ENCODE measurements at regions of chr2 and their contacts with region 1.

Region 1: GRCh38 chr2:97806738-97807618 is 93.6 kb downstream of the ZAP70 start:
- DNase-seq: peak; percentile 76
- H3K27ac ChIP-seq: no peak overlapping the region
- CTCF ChIP-seq: peak; percentile 93

Region 2: DNA sequence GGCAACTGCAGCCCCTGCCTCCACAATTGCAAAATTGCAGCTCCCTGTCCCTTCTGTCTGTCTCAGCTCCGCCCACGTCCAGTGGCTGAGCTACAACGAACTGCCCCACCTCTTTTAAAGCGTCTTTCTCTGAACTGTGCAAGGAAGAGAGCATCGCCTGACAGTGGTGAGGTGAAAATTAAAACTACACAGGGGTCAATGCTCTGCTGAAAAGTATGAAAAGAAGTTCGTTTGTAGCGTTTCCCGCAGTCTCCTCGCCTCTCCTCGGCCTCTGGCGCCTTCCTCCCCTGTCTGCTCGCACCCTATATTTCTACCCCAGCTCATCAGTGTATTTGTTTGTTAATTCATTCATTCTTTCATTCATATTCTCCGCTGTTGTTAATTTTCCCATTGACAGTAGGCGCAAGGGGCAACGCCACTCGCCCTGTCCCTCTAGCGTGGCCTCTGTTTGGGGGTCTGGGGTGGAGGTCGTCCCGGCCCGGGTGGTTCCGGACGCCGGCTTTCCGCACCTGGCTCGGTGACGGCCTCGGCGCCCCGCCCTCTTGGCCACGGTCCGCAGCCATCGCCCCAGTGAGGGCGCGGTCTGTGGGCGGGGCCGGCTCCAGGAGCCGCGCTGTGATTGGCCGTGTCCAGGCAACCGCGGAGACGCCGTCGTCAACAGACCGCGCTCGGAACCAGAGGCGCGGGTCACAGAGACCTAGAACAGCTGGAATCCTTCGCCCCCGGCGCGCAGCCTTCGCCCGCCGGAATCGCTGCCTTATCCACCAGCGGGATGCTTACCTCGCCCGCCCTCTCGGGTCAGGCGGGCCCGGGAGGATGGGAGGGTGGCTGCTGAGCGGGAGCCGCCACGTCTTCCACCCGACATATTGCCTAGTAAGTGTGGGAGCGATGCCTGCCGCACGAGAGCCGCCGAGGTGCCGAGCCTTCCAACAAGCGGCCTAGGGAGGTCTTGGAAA is 279.8 kb after region 1 on chr2 and contains the start of gene VWA3B:
- CTCF ChIA-PET with region 1: no interaction called
- POLR2A ChIA-PET with region 1: no interaction called
- DNase-seq: peak; percentile 91
- H3K27ac ChIP-seq: no peak within 1 kb of the TSS
- CTCF ChIP-seq: no peak

Region 3: GRCh38 chr2:98188351-98189049 is 381.5 kb after region 1 on chr2:
- CTCF ChIA-PET with region 1: interaction called, 16 read pairs
- POLR2A ChIA-PET with region 1: no interaction called
- DNase-seq: peak; percentile 83
- H3K27ac ChIP-seq: no peak overlapping the region
- CTCF ChIP-seq: no peak

Region 4: DNA sequence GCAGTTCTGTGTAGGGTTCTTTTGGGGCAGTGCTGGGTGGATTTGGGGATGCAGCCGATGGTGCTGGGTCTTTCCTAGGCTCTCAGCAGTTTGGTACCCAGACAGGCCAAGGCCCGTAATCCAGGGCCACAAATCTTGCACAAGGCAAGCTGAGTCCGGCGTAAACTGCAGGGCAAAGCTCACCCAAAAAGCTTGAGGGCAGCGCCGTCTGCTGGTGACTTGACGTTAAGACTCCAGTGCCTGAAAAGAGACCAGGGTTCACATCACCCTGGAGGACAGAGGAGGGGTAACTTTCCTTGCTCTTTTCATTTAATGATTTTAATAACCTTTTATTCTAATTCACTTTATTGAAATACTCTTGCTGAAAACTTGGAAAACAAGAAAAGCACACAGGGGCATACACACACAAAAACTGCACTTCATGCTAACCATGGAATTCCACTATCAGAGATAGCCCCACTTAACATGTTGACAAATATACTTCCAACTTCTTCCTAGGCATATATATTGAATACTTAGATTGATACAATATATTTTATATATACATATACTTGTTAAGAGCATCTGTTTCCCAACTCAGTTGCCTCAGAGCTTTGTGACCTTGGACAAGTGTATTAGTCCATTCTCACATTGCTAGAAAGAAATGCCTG is 578.2 kb after region 1 on chr2:
- CTCF ChIA-PET with region 1: interaction called, 13 read pairs
- POLR2A ChIA-PET with region 1: no interaction called
- DNase-seq: peak; percentile 82
- H3K27ac ChIP-seq: no peak overlapping the region
- CTCF ChIP-seq: peak; percentile 94

Region 5: GRCh38 chr2:98412751-98413458 is 605.9 kb after region 1 on chr2:
- CTCF ChIA-PET with region 1: no interaction called
- POLR2A ChIA-PET with region 1: no interaction called
- DNase-seq: peak; percentile 62
- H3K27ac ChIP-seq: no peak overlapping the region
- CTCF ChIP-seq: peak; percentile 74

Measured in RWPE1 (cell line).